ENCODE measurements at regions of chr9 and their contacts with region 1.

Region 1: GRCh38 chr9:127396808-127397497 is at the start of gene SLC2A8:
- DNase-seq: peak; percentile 99
- ATAC-seq: peak; percentile 96
- H3K4me3 ChIP-seq: peak within 1 kb of the TSS; percentile 55
- H3K27ac ChIP-seq: peak within 1 kb of the TSS; percentile 25; the same call in 1 of the 2 replicates
- H3K4me1 ChIP-seq: peaks cover 2% of the 10 kb centered on the region; the same call in 1 of the 2 replicates
- H3K27me3 ChIP-seq: peaks cover 5% of the 10 kb centered on the region; the same call in 1 of the 2 replicates
- CTCF ChIP-seq: 0 out of 2 replicates have a peak, but pooled peaks have one; percentile 1
- POLR2A ChIP-seq: peak; percentile 78
- RAD21 ChIP-seq: no peak
- total RNA-seq, gene SLC2A8: 6.4 and 9.0 TPM in 2 replicates

Region 2: DNA sequence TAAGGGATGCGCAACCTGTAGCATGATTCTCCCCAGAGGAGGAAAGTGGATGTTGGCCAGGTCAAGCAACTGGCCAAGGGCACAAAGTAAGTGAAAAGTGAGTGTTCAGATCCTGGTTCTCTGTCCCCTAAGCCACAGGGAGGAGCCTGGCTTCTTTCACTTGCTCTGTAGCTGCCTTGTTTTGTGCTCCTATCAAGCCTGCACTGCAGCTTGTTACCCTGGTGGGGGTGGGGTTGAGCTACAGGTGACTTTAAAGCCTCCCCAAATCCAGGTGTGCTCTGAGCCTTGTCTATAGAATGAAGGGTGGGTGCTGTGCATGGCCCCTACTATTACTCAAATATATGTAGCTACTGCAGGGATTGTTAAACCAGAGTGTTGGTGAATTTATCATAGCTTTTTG is 449.4 kb before region 1 on chr9:
- CTCF ChIA-PET with region 1: no interaction called
- POLR2A ChIA-PET with region 1: no interaction called
- dilution Hi-C with region 1: no loop called
- in situ Hi-C with region 1: loop called (anchors 25 kb)
- intact Hi-C with region 1: no loop called
- DNase-seq: no peak
- ATAC-seq: no peak
- H3K4me3 ChIP-seq: no peak overlapping the region
- H3K27ac ChIP-seq: no peak overlapping the region
- H3K4me1 ChIP-seq: peaks cover 6% of the 10 kb centered on the region
- H3K27me3 ChIP-seq: peaks cover 2% of the 10 kb centered on the region; the same call in 1 of the 2 replicates
- CTCF ChIP-seq: no peak
- POLR2A ChIP-seq: no peak
- RAD21 ChIP-seq: no peak

Region 3: DNA sequence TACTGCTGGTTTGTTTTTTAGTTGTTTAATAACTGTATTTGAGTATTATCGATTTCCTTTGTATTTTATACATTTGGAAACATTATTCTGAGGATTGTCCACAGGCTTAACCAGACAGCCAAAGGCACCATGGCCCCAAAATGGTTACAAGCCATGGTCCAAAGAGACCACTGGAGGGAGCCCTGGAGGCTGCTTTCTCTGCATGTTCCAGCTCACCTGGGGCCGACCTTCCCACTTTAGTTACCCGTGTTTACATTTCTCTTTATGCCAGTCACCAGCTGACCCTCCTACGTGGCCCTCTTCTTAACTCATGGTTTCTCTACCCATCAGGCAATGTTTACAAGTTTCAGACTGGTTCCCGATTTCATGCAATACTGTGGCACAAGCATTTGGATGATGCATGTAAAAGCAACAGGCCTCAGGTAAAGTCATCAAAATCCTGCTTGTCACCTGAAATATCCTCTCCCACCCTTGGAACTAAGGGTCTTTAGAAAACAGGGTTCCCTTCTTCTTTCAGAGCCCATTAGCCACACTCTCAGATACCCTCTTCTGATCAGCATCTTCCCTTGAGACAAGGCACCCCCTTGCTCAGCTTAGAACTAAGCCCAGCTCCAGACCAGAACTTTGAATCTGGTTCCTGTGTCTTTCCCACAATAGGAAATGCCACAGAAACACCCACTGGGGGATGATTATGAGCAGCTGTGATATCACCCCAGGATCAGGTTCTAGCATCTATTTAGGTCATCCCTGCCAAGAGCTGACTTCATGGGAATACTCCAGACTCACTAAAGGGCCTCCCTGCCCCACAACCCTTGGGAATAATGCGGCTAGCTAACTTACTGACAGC is 182.3 kb before region 1 on chr9:
- CTCF ChIA-PET with region 1: no interaction called
- POLR2A ChIA-PET with region 1: no interaction called
- dilution Hi-C with region 1: no loop called
- in situ Hi-C with region 1: loop called (anchors 5 kb)
- intact Hi-C with region 1: loop called (anchors 2 kb)
- DNase-seq: peak; percentile 89
- ATAC-seq: peak; percentile 83
- H3K4me3 ChIP-seq: no peak overlapping the region
- H3K27ac ChIP-seq: no peak overlapping the region
- H3K4me1 ChIP-seq: peaks cover 6% of the 10 kb centered on the region; the same call in 1 of the 2 replicates
- H3K27me3 ChIP-seq: peaks cover 8% of the 10 kb centered on the region
- CTCF ChIP-seq: peak; percentile 72
- POLR2A ChIP-seq: no peak
- RAD21 ChIP-seq: peak; percentile 78

Region 4: DNA sequence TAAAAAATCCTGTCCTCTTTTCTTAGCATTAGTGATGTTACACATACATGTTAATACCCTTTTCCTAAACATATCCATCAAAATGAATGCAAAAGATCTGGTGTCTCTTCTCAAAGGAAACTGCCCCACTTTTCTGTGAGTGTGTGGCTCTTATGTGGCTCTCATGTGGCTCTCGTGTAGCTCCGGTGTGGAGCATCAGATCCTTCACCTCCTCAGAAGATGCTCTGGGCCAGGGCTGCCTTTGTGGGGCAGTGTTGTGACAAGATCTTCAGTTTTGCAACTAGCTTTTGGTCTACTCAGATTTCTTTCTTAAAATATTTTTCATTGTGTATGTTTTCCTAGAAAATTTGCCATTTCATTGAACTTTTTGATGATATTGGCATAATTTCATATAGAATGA is 113.0 kb before region 1 on chr9:
- CTCF ChIA-PET with region 1: interaction called, 8 read pairs
- POLR2A ChIA-PET with region 1: no interaction called
- dilution Hi-C with region 1: no loop called
- in situ Hi-C with region 1: no loop called
- intact Hi-C with region 1: loop called (anchors 10 kb)
- DNase-seq: peak; percentile 51
- ATAC-seq: peak; percentile 80
- H3K4me3 ChIP-seq: no peak overlapping the region
- H3K27ac ChIP-seq: no peak overlapping the region
- H3K4me1 ChIP-seq: peaks cover 2% of the 10 kb centered on the region; the same call in 1 of the 2 replicates
- H3K27me3 ChIP-seq: no peaks in the 10 kb centered on the region; the same call in 1 of the 2 replicates
- CTCF ChIP-seq: peak; percentile 48
- POLR2A ChIP-seq: no peak
- RAD21 ChIP-seq: peak; percentile 44

Region 5: GRCh38 chr9:127308652-127309429 is 88.1 kb before region 1 on chr9:
- CTCF ChIA-PET with region 1: interaction called, 5 read pairs
- POLR2A ChIA-PET with region 1: interaction called, 11 read pairs
- dilution Hi-C with region 1: no loop called
- in situ Hi-C with region 1: no loop called
- intact Hi-C with region 1: no loop called
- DNase-seq: peak; percentile 64
- ATAC-seq: peak; percentile 59
- H3K4me3 ChIP-seq: no peak overlapping the region
- H3K27ac ChIP-seq: no peak overlapping the region
- H3K4me1 ChIP-seq: peaks cover 5% of the 10 kb centered on the region
- H3K27me3 ChIP-seq: no peaks in the 10 kb centered on the region
- CTCF ChIP-seq: no peak
- POLR2A ChIP-seq: no peak
- RAD21 ChIP-seq: no peak